ENCODE measurements at regions of chr2 and their contacts with region 1.

Region 1: GRCh38 chr2:126776692-126777619 is 121.0 kb downstream of the GYPC start:
- DNase-seq: peak; percentile 86
- H3K4me3 Mint-ChIP-seq: peak overlapping the region; percentile 83
- H3K27ac Mint-ChIP-seq: peak overlapping the region; percentile 9
- H3K4me1 Mint-ChIP-seq: peaks cover 10% of the 10 kb centered on the region
- H3K27me3 Mint-ChIP-seq: no peaks in the 10 kb centered on the region

Region 2: DNA sequence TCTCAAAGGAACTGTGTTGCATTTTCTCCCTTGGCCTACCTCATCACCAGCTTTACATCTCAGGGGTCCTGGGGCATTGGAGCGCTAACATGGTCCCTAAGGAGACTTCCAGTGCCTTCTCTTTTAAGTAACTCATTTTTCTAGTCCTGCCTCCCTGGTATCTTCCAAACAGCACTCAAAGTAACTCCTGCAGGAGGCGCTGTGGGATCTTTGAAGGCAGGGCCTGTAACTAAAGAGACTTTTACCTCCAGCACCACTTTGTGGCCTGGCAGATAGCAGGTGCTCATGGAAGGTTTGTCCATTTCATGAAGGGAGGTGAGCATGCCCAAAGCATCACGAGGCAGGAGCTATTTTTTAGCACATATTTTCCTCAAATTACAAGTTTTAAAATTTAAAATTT is 532.0 kb before region 1 on chr2:
- CTCF ChIA-PET with region 1: interaction called, 5 read pairs
- intact Hi-C with region 1: loop called (anchors 1 kb)
- DNase-seq: peak; percentile 81
- H3K4me3 Mint-ChIP-seq: no peak overlapping the region
- H3K27ac Mint-ChIP-seq: no peak overlapping the region
- H3K4me1 Mint-ChIP-seq: no peaks in the 10 kb centered on the region
- H3K27me3 Mint-ChIP-seq: peaks cover 8% of the 10 kb centered on the region

Region 3: GRCh38 chr2:126399001-126399400 is 378.0 kb before region 1 on chr2:
- CTCF ChIA-PET with region 1: interaction called, 4 read pairs
- intact Hi-C with region 1: loop called (anchors 1 kb)
- DNase-seq: peak; percentile 47
- H3K4me3 Mint-ChIP-seq: no peak overlapping the region
- H3K27ac Mint-ChIP-seq: no peak overlapping the region
- H3K4me1 Mint-ChIP-seq: no peaks in the 10 kb centered on the region
- H3K27me3 Mint-ChIP-seq: peaks cover 9% of the 10 kb centered on the region

Region 4: GRCh38 chr2:126467367-126468054 is 309.4 kb before region 1 on chr2:
- CTCF ChIA-PET with region 1: interaction called, 4 read pairs
- intact Hi-C with region 1: loop called (anchors 1 kb)
- DNase-seq: peak; percentile 26
- H3K4me3 Mint-ChIP-seq: no peak overlapping the region
- H3K27ac Mint-ChIP-seq: no peak overlapping the region
- H3K4me1 Mint-ChIP-seq: no peaks in the 10 kb centered on the region
- H3K27me3 Mint-ChIP-seq: peaks cover 3% of the 10 kb centered on the region

Region 5: DNA sequence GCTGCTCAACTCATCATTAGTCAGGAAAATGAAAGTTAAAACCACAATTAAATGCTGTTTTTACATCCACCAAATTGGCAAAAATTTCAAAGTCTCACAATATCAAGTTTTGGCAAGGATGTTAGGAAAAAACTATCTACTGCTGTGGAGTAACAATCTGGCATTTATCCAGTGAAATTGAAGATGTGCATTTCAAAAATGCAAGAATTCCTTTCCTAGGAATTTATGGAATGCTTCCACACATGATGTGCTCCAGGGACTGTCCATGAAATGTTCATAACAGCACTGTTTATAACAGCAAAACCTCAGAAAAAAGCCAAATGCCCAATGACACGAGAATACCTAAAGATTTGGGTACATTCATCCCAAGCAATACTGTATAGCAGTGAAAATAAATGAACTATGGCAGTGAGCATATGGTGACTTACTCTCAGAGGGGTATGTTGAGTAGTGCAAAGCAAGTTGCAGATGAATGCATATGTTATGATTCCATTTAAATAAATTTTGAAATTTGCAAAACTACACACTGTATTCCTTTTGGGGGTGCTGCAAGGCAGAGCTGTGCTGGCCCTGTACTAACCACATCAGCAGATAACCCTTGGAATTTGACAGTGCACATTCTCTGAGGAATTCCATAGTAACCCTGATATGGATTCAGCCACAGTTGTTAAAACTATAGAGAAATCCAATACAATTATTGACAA is 162.3 kb before region 1 on chr2:
- CTCF ChIA-PET with region 1: no interaction called
- intact Hi-C with region 1: loop called (anchors 5 kb)
- DNase-seq: no peak
- H3K4me3 Mint-ChIP-seq: no peak overlapping the region
- H3K27ac Mint-ChIP-seq: no peak overlapping the region
- H3K4me1 Mint-ChIP-seq: no peaks in the 10 kb centered on the region
- H3K27me3 Mint-ChIP-seq: no peaks in the 10 kb centered on the region

Region 6: GRCh38 chr2:126657636-126658318 is 119.2 kb before region 1 on chr2:
- CTCF ChIA-PET with region 1: interaction called, 3 read pairs
- intact Hi-C with region 1: loop called (anchors 1 kb)
- DNase-seq: peak; percentile 87
- H3K4me3 Mint-ChIP-seq: peak overlapping the region; percentile 100
- H3K27ac Mint-ChIP-seq: peak overlapping the region; percentile 100
- H3K4me1 Mint-ChIP-seq: peaks cover 61% of the 10 kb centered on the region
- H3K27me3 Mint-ChIP-seq: no peaks in the 10 kb centered on the region

Region 7: DNA sequence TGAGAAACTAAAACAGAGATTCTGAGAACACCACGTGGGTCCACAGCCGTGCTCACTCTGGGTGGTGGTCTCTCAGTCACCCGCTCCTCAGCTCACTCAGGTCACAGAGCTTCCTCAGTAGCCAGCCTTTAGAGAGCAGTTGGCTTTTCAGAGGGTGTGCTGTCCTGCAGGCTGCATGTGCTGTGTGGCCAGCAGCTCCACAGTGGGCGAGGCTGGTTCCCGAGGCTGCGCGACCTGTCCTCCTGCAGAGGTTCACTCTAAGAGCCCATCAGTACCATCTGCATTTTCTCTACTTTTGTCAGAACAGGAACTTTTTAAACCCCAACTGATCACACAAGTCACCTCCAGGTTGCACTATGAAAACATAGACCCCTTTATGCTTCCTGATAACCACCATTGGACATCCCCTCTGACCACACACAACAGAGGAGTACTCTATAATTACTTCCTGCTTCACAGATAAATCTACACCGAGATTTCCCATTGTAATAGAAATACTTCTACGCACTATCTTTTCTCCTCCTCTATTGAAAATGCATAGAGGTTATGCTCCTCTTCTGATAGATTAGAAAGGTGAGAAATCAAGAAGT is 27.9 kb before region 1 on chr2:
- CTCF ChIA-PET with region 1: no interaction called
- intact Hi-C with region 1: no loop called
- DNase-seq: no peak
- H3K4me3 Mint-ChIP-seq: no peak overlapping the region
- H3K27ac Mint-ChIP-seq: no peak overlapping the region
- H3K4me1 Mint-ChIP-seq: peaks cover under 1% of the 10 kb centered on the region
- H3K27me3 Mint-ChIP-seq: no peaks in the 10 kb centered on the region

Region 8: GRCh38 chr2:126971481-126972278 is 194.7 kb after region 1 on chr2:
- CTCF ChIA-PET with region 1: interaction called, 3 read pairs
- intact Hi-C with region 1: loop called (anchors 1 kb)
- DNase-seq: peak; percentile 74
- H3K4me3 Mint-ChIP-seq: peak overlapping the region; percentile 47
- H3K27ac Mint-ChIP-seq: no peak overlapping the region
- H3K4me1 Mint-ChIP-seq: peaks cover 2% of the 10 kb centered on the region
- H3K27me3 Mint-ChIP-seq: peaks cover 28% of the 10 kb centered on the region

Measured in activated naive CD4-positive, alpha-beta T cell treated with anti-CD3 and anti-CD28 coated beads for 36 hours (primary cell).